CD8-positive, alpha-beta T cell (primary cell): ENCODE measurements at regions of chrX and their contacts with region 1.

Region 1: DNA sequence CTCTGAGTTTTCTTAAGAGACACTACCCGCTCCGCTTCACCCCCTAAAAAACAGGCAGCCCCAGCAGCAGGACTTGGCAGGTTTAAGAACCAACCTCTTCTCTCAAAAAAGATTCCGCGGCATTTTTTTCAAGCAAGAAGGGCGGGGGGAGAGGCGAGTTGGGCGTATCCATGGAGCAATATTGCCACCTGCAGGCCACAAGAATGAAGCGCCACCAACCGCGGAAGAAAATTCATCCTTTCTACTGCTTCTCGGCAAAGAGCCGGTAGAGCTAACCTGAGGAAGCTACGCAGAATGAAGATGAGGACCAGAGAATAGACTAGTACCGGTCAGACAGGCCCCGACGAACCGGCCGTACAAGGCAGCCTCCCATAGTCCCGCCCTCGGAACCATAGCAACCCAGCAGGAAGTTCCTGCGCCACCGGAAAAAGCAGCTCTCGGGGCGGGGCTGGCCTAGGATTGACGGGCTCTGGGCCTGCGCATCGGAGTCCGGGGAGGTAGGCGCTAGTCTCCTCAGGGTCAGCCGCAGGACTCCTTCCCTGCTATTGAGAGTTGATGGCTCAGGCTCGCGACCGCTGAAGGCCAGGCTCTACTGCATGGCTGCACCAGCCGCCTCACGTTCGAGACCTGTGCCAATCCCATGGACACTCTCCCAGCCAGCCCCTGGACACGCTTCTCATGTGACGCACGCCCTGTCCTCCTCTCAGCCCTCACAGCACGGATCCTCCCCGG is 76.9 kb downstream of the MAGED4 start:
- DNase-seq: peak; percentile 66 to 96 (median 86)
- ATAC-seq: peak; percentile 95
- H3K4me3 ChIP-seq: peak overlapping the region; percentile 68 to 92
- H3K4me3 Mint-ChIP-seq: peak overlapping the region; percentile 92
- H3K27ac ChIP-seq: peak overlapping the region; percentile 84 to 93
- H3K27ac Mint-ChIP-seq: peak overlapping the region; percentile 97
- H3K4me1 ChIP-seq: peaks cover 5% of the 10 kb centered on the region
- H3K4me1 Mint-ChIP-seq: peaks cover 12% of the 10 kb centered on the region
- H3K27me3 ChIP-seq: no peaks in the 10 kb centered on the region
- H3K27me3 Mint-ChIP-seq: peaks cover 17% of the 10 kb centered on the region
- CTCF ChIP-seq: peak; percentile 71

Region 2: GRCh38 chrX:50343917-50344316 is 1917.7 kb before region 1 on chrX:
- CTCF ChIA-PET with region 1: no interaction called
- POLR2A ChIA-PET with region 1: no interaction called
- intact Hi-C with region 1: no loop called
- DNase-seq: no peak
- ATAC-seq: no peak
- H3K4me3 ChIP-seq: no peak overlapping the region
- H3K4me3 Mint-ChIP-seq: no peak overlapping the region
- H3K27ac ChIP-seq: no peak overlapping the region
- H3K27ac Mint-ChIP-seq: no peak overlapping the region
- H3K4me1 ChIP-seq: no peaks in the 10 kb centered on the region
- H3K4me1 Mint-ChIP-seq: no peaks in the 10 kb centered on the region
- H3K27me3 ChIP-seq: no peaks in the 10 kb centered on the region
- H3K27me3 Mint-ChIP-seq: no peaks in the 10 kb centered on the region
- CTCF ChIP-seq: no peak

Region 3: GRCh38 chrX:51614353-51615012 is 647.1 kb before region 1 on chrX:
- CTCF ChIA-PET with region 1: no interaction called
- POLR2A ChIA-PET with region 1: no interaction called
- intact Hi-C with region 1: loop called in 1 of 2 experiments (anchors 5 kb)
- DNase-seq: peak in 2 of 9 experiments; percentile 31 to 43
- ATAC-seq: no peak
- H3K4me3 ChIP-seq: no peak overlapping the region
- H3K4me3 Mint-ChIP-seq: no peak overlapping the region
- H3K27ac ChIP-seq: no peak overlapping the region
- H3K27ac Mint-ChIP-seq: no peak overlapping the region
- H3K4me1 ChIP-seq: no peaks in the 10 kb centered on the region
- H3K4me1 Mint-ChIP-seq: peaks cover 3% of the 10 kb centered on the region
- H3K27me3 ChIP-seq: no peaks in the 10 kb centered on the region
- H3K27me3 Mint-ChIP-seq: peaks cover 36% of the 10 kb centered on the region
- CTCF ChIP-seq: peak; percentile 44

Region 4: GRCh38 chrX:51802917-51803688 is 458.5 kb before region 1 on chrX:
- CTCF ChIA-PET with region 1: no interaction called
- POLR2A ChIA-PET with region 1: interaction called, 8 read pairs
- intact Hi-C with region 1: loop called in 1 of 2 experiments (anchors 1 kb)
- DNase-seq: peak; percentile 27 to 88 (median 63)
- ATAC-seq: peak; percentile 83
- H3K4me3 ChIP-seq: peak overlapping the region; percentile 73 to 91
- H3K4me3 Mint-ChIP-seq: peak overlapping the region; percentile 98
- H3K27ac ChIP-seq: peak overlapping the region; percentile 91 to 93
- H3K27ac Mint-ChIP-seq: peak overlapping the region; percentile 99
- H3K4me1 ChIP-seq: peaks cover 13% of the 10 kb centered on the region
- H3K4me1 Mint-ChIP-seq: peaks cover 39% of the 10 kb centered on the region
- H3K27me3 ChIP-seq: no peaks in the 10 kb centered on the region
- H3K27me3 Mint-ChIP-seq: peaks cover 1% of the 10 kb centered on the region
- CTCF ChIP-seq: no peak

Region 5: DNA sequence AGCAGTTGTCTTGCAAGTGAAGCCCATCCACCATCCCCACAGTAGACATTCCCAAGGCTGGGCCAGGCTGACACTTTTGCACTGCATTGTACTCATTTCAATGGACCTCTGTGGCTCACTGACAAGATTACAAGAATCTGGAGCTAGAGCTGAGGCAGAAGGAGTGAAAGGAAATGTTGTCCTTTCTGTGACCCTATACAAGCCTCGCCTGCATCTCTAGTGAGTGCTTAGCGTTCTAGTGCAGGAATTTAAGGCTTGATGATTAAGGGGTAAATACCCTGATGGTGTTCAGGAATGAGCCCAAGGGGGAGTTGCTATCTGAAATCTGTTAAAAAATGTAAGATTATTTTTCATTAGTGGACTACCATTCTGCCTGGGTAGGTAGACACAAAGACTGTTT is 361.9 kb before region 1 on chrX:
- CTCF ChIA-PET with region 1: no interaction called
- POLR2A ChIA-PET with region 1: no interaction called
- intact Hi-C with region 1: loop called (anchors 2 to 5 kb)
- DNase-seq: no peak
- ATAC-seq: no peak
- H3K4me3 ChIP-seq: no peak overlapping the region
- H3K4me3 Mint-ChIP-seq: no peak overlapping the region
- H3K27ac ChIP-seq: no peak overlapping the region
- H3K27ac Mint-ChIP-seq: no peak overlapping the region
- H3K4me1 ChIP-seq: peaks cover 7% of the 10 kb centered on the region
- H3K4me1 Mint-ChIP-seq: peaks cover 24% of the 10 kb centered on the region
- H3K27me3 ChIP-seq: no peaks in the 10 kb centered on the region
- H3K27me3 Mint-ChIP-seq: no peaks in the 10 kb centered on the region
- CTCF ChIP-seq: no peak

Region 6: GRCh38 chrX:52280812-52281211 is 19.2 kb after region 1 on chrX:
- CTCF ChIA-PET with region 1: no interaction called
- POLR2A ChIA-PET with region 1: no interaction called
- intact Hi-C with region 1: no loop called
- DNase-seq: no peak
- ATAC-seq: no peak
- H3K4me3 ChIP-seq: no peak overlapping the region
- H3K4me3 Mint-ChIP-seq: no peak overlapping the region
- H3K27ac ChIP-seq: no peak overlapping the region
- H3K27ac Mint-ChIP-seq: no peak overlapping the region
- H3K4me1 ChIP-seq: no peaks in the 10 kb centered on the region
- H3K4me1 Mint-ChIP-seq: no peaks in the 10 kb centered on the region
- H3K27me3 ChIP-seq: no peaks in the 10 kb centered on the region
- H3K27me3 Mint-ChIP-seq: peaks cover 9% of the 10 kb centered on the region
- CTCF ChIP-seq: no peak

Region 7: DNA sequence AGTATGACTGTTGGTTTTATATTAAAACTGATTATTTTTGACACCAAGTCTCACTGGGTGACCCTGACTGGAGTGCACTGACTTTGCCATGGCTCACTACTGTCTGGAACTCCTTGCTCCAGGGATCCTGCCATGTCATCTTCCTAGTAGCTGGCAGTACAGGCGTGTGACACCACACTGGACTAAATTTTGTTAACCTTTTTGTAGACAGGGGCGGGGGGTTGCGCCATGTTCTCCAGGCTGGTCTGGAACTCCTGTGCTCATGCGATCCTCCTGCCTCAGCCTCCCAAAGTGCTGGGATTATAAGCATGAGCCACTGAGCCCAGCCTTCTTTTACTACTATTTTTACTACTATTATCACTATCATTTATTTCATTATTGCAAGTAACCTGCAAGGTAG is 242.9 kb after region 1 on chrX:
- CTCF ChIA-PET with region 1: no interaction called
- POLR2A ChIA-PET with region 1: no interaction called
- intact Hi-C with region 1: no loop called
- DNase-seq: no peak
- ATAC-seq: no peak
- H3K4me3 ChIP-seq: no peak overlapping the region
- H3K4me3 Mint-ChIP-seq: no peak overlapping the region
- H3K27ac ChIP-seq: no peak overlapping the region
- H3K27ac Mint-ChIP-seq: no peak overlapping the region
- H3K4me1 ChIP-seq: no peaks in the 10 kb centered on the region
- H3K4me1 Mint-ChIP-seq: no peaks in the 10 kb centered on the region
- H3K27me3 ChIP-seq: no peaks in the 10 kb centered on the region
- H3K27me3 Mint-ChIP-seq: peaks cover 6% of the 10 kb centered on the region
- CTCF ChIP-seq: no peak